Panc1 (cell line): ENCODE measurements at regions of chr3 and their contacts with region 1.

Region 1: GRCh38 chr3:33787328-33788009 is 11.0 kb upstream of the PDCD6IP start:
- DNase-seq: peak; percentile 39
- ATAC-seq: peak; percentile 96
- H3K4me3 ChIP-seq: peak overlapping the region; percentile 44 to 59
- H3K27ac ChIP-seq: no peak overlapping the region
- H3K4me1 ChIP-seq: peaks cover 3% of the 10 kb centered on the region; the same call in 1 of the 2 replicates
- H3K27me3 ChIP-seq: no peaks in the 10 kb centered on the region
- CTCF ChIP-seq: peak; percentile 84

Region 2: DNA sequence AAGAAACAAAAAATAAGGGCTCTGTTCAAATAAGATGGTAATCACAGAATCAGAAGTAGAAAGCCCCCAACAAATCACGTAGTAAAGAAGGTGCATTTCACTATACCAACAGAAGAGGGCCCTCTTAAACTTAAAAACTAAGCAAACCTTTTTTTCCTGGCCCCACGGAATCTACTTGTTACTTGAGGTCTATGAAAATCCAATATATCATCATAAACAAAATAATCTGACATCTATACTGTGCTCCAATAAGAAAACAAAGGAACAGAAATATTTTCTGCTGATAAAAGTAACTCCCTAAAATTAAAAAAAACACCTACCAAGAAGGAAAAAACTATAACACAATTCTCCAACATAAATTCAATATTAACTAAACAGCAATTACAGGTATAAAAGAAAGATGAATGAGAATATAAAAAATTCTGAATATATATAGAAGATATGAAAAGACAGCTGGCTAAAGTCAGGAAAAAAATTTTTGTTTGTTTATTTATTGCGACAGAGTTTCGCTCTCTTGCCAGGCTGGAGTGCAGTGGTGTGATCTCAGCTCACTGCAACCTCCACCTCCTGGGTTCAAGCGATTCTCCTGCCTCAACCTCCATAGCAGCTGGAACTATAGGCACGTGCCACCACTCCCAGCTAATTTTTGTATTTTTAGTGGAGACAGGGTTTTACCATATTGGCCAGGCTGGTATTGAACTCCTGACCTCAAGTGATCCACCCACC is 151.2 kb before region 1 on chr3:
- CTCF ChIA-PET with region 1: interaction called, 11 read pairs
- POLR2A ChIA-PET with region 1: interaction called, 7 read pairs
- in situ Hi-C with region 1: no loop called
- intact Hi-C with region 1: loop called (anchors 1 kb)
- DNase-seq: no peak
- ATAC-seq: no peak
- H3K4me3 ChIP-seq: no peak overlapping the region
- H3K27ac ChIP-seq: no peak overlapping the region
- H3K4me1 ChIP-seq: no peaks in the 10 kb centered on the region
- H3K27me3 ChIP-seq: no peaks in the 10 kb centered on the region
- CTCF ChIP-seq: peak; percentile 60; the same call in 1 of the 2 replicates

Region 3: GRCh38 chr3:34106879-34107278 is 319.4 kb after region 1 on chr3:
- CTCF ChIA-PET with region 1: no interaction called
- POLR2A ChIA-PET with region 1: no interaction called
- in situ Hi-C with region 1: no loop called
- intact Hi-C with region 1: no loop called
- DNase-seq: peak; percentile 12
- ATAC-seq: no peak
- H3K4me3 ChIP-seq: no peak overlapping the region
- H3K27ac ChIP-seq: no peak overlapping the region
- H3K4me1 ChIP-seq: no peaks in the 10 kb centered on the region
- H3K27me3 ChIP-seq: no peaks in the 10 kb centered on the region
- CTCF ChIP-seq: peak; percentile 60